Activated T-helper 1 cell treated with anti-CD3 and anti-CD28 coated beads, Interleukin-12 subunit alpha, Interleukin-12 subunit beta, Interleukin-2, Interleukin-4 antibody, amounts not matched to agents 30 ng/mL and 10 ng/mL and 1 ng/mL, durations not matched to agents 14 hours and 24 hours and 36 hours (primary cell): ENCODE measurements at regions of chr5 and their contacts with region 1.

Region 1: DNA sequence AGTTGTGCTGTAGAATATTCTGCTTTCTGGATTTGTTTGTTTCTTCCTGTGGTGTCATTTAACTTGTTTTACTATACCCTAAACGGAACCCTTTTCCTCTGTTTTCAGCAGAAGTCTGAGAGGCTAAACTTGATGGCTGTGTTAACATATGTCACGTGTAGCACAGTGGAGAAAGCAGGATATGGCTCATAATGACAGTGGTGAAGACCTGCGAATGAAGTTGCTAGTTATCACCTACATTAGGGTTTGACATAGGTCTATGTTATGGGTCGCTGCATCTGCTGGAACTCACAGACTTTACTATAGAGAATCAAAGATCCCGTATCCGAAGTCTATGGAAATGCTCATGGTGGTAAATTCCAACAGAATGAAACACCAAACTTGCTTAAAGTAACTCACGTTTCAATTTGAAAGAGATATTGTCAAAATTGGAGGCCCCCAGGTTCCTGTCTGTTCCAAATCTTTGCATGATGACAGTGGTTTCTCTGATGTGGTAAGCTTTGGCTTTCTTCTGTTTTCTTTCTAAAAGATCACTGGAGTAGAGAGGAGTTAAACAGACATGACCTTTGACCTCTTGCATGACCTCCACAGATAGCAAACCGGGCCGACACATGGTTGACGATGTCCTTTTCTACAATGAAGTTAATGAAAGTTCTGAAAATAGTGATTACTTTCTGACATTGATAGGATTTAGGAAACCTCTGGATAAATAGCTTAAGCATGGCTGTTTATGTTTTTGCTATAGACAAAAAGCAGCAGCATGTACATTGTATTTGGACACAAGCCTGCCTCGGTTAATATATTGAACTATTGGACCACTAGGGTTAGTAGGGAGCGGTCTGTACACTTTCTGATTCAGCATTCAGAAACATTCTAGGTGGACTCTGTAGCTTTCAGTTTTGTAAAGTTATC is 3.1 kb upstream of the CATSPER3 start:
- DNase-seq: peak; percentile 14
- H3K4me3 Mint-ChIP-seq: no peak overlapping the region
- H3K27ac Mint-ChIP-seq: peak overlapping the region; percentile 65
- H3K4me1 Mint-ChIP-seq: peaks cover 28% of the 10 kb centered on the region
- H3K27me3 Mint-ChIP-seq: no peaks in the 10 kb centered on the region

Region 2: GRCh38 chr5:134920848-134921575 is 43.6 kb before region 1 on chr5:
- intact Hi-C with region 1: loop called (anchors 2 kb)
- DNase-seq: no peak
- H3K4me3 Mint-ChIP-seq: no peak overlapping the region
- H3K27ac Mint-ChIP-seq: peak overlapping the region; percentile 77
- H3K4me1 Mint-ChIP-seq: peaks cover 24% of the 10 kb centered on the region
- H3K27me3 Mint-ChIP-seq: no peaks in the 10 kb centered on the region

Region 3: DNA sequence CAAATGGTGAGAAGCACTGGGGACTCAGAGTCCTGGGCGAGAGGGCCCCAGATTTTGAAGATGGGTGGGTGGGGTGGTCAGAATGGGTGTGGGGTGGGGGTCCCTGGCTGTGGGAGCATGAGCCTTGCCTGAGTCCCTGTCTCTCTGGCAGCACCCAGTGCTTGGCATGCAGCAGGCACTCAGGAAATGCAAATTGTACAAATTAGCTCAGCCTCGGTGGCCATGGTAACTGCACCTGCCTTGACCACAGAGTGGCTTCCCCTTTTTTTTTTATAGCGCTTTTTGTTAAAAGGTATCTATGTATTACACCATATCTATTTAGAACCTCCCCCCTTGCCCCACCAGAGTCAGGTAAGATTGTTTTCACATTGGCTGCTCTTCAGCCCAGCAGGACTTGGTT is 88.7 kb after region 1 on chr5:
- intact Hi-C with region 1: no loop called
- DNase-seq: no peak
- H3K4me3 Mint-ChIP-seq: no peak overlapping the region
- H3K27ac Mint-ChIP-seq: no peak overlapping the region
- H3K4me1 Mint-ChIP-seq: no peaks in the 10 kb centered on the region
- H3K27me3 Mint-ChIP-seq: peaks cover 53% of the 10 kb centered on the region